Right cardiac atrium (tissue), 5 donors: ENCODE measurements at regions of chr7 and their contacts with region 1.

Region 1: GRCh38 chr7:56074371-56074791 is 10.3 kb downstream of the SUMF2 start:
- DNase-seq: peak; percentile 84 to 93 (median 92)
- ATAC-seq: peak; percentile 91 to 92
- H3K4me3 ChIP-seq: no peak overlapping the region
- H3K27ac ChIP-seq: no peak overlapping the region
- H3K4me1 ChIP-seq: peaks cover 3% of the 10 kb centered on the region
- H3K27me3 ChIP-seq: no peaks in the 10 kb centered on the region

Region 2: DNA sequence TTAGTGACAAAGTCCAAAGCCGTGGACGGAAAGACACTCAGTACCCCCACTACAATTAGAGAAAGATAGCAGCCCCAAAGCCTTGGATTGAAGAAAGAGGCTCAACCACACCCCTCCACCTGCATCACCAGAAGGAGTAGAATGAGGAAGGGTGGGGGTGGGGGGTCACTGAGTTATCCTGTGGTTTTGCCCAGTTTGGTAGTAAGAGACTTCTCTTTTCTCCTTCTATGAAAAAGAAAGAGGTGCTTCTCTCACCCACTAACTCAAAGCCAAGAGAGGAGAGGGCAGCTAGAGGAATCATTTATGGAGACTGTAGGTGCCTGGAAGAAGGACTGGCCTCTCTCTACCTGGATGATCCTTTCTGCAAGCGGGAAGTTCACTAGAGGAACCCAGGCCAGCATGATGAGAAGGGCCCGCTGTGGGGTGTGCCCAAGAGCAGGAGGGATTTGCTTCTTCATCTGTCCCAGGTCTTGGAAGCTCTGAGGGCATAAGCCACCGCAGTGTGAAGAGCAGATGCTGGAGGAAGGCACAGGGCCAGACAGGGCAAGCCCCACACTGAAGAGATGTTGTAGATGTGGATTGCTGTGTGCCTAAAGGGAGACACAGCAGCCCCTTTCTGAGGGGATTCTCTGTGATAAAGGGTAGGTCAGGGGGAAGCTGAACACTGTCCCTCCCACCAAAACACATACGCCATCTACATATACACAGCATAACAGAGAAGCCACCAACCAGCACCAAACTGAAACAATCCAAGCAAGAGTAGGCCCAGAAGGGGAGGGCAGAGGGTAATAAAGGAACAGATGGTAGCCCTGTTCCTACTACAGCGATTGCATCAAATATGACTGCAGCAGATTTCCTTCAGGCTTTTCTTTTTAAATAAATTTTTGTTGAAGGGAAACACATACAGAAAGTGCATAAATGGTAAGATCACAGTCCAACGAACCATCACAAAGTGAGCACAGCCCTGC is 735.1 kb before region 1 on chr7:
- intact Hi-C with region 1: no loop called
- DNase-seq: no peak
- ATAC-seq: no peak
- H3K4me3 ChIP-seq: no peak overlapping the region
- H3K27ac ChIP-seq: no peak overlapping the region
- H3K4me1 ChIP-seq: no peaks in the 10 kb centered on the region
- H3K27me3 ChIP-seq: no peaks in the 10 kb centered on the region

Region 3: GRCh38 chr7:55641273-55641691 is 433.1 kb before region 1 on chr7:
- intact Hi-C with region 1: loop called in 1 of 4 experiments (anchors 10 kb)
- DNase-seq: no peak
- ATAC-seq: peak; percentile 93 to 94
- H3K4me3 ChIP-seq: no peak overlapping the region
- H3K27ac ChIP-seq: no peak overlapping the region
- H3K4me1 ChIP-seq: no peaks in the 10 kb centered on the region
- H3K27me3 ChIP-seq: no peaks in the 10 kb centered on the region

Region 4: GRCh38 chr7:55939514-55940123 is 134.8 kb before region 1 on chr7:
- intact Hi-C with region 1: no loop called
- DNase-seq: no peak
- ATAC-seq: no peak
- H3K4me3 ChIP-seq: no peak overlapping the region
- H3K27ac ChIP-seq: no peak overlapping the region
- H3K4me1 ChIP-seq: no peaks in the 10 kb centered on the region
- H3K27me3 ChIP-seq: no peaks in the 10 kb centered on the region

Region 5: DNA sequence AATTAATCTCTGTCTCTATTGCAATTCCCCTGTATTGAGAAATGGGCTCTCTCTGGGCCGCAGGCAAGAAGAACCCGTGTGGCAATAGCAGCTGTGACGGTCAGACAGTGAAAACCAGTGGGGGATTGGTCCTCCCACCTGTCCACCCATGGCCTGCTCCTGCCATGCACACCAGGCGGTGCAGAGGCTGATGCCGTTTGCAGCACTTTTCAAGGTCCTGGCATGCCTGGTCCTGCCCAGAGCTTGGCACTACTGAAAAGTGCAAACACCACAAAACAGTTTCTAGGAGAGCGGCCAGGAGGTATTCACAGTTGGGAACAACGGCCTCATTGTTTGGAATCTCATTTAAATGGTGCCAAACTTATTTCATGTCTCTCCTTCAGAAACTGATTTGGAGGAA is 64.7 kb before region 1 on chr7:
- intact Hi-C with region 1: loop called in 3 of 4 experiments (anchors 5 to 10 kb)
- DNase-seq: no peak
- ATAC-seq: peak; percentile 44 to 56
- H3K4me3 ChIP-seq: no peak overlapping the region
- H3K27ac ChIP-seq: no peak overlapping the region
- H3K4me1 ChIP-seq: no peaks in the 10 kb centered on the region
- H3K27me3 ChIP-seq: no peaks in the 10 kb centered on the region

Region 6: GRCh38 chr7:56686276-56686859 is 612.0 kb after region 1 on chr7:
- intact Hi-C with region 1: no loop called
- DNase-seq: no peak
- ATAC-seq: no peak
- H3K4me3 ChIP-seq: no peak overlapping the region
- H3K27ac ChIP-seq: no peak overlapping the region
- H3K4me1 ChIP-seq: no peaks in the 10 kb centered on the region
- H3K27me3 ChIP-seq: no peaks in the 10 kb centered on the region